A673 (cell line): ENCODE measurements at regions of chr15 and their contacts with region 1.

Region 1: DNA sequence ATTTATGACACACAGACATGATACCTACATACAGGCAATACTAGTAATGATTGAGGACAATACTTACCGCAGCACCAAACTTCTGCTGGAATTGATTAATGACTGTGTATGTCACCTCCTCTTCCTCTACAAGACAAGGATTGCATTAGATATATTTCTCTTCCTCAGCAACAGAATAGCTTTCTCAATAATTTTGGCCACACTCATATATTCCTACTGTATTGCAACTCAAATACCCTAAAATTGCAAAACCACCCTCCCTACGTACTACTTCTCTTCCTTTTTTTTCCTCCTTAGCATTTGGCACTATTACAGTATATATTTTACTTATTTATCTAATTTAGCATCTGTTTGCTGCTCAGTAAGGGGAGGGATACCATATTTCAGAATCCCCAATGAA is 14.8 kb downstream of the EXD1 start:
- DNase-seq: no peak
- H3K4me3 ChIP-seq: no peak overlapping the region
- H3K27ac ChIP-seq: no peak overlapping the region
- H3K4me1 ChIP-seq: no peaks in the 10 kb centered on the region
- H3K27me3 ChIP-seq: peaks cover 8% of the 10 kb centered on the region
- CTCF ChIP-seq: no peak

Region 2: GRCh38 chr15:41194444-41194843 is 21.3 kb before region 1 on chr15:
- CTCF ChIA-PET with region 1: no interaction called
- POLR2A ChIA-PET with region 1: no interaction called
- intact Hi-C with region 1: no loop called
- DNase-seq: no peak
- H3K4me3 ChIP-seq: no peak overlapping the region
- H3K27ac ChIP-seq: no peak overlapping the region
- H3K4me1 ChIP-seq: no peaks in the 10 kb centered on the region
- H3K27me3 ChIP-seq: no peaks in the 10 kb centered on the region
- CTCF ChIP-seq: no peak

Region 3: DNA sequence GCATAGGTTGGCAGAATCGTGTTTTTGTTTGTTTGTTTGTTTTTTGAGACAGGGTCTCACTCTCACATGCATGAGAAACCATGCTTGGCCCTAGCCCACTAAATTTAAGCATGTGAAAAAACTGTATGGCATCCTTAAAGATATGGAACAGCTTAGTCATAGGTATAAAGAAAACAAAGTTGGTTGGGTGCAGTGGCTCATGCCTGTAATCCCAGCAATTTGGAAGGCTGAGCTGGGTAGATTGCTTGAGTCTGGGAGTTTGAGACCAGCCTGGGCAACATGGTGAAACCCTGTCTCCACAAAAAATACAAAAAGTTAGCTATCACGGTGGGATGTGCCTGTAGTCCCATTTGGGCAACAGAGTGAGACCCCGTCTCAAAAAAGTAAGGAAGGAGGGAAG is 10.4 kb before region 1 on chr15:
- CTCF ChIA-PET with region 1: interaction called, 10 read pairs
- POLR2A ChIA-PET with region 1: no interaction called
- intact Hi-C with region 1: no loop called
- DNase-seq: no peak
- H3K4me3 ChIP-seq: no peak overlapping the region
- H3K27ac ChIP-seq: no peak overlapping the region
- H3K4me1 ChIP-seq: no peaks in the 10 kb centered on the region
- H3K27me3 ChIP-seq: no peaks in the 10 kb centered on the region
- CTCF ChIP-seq: no peak

Region 4: DNA sequence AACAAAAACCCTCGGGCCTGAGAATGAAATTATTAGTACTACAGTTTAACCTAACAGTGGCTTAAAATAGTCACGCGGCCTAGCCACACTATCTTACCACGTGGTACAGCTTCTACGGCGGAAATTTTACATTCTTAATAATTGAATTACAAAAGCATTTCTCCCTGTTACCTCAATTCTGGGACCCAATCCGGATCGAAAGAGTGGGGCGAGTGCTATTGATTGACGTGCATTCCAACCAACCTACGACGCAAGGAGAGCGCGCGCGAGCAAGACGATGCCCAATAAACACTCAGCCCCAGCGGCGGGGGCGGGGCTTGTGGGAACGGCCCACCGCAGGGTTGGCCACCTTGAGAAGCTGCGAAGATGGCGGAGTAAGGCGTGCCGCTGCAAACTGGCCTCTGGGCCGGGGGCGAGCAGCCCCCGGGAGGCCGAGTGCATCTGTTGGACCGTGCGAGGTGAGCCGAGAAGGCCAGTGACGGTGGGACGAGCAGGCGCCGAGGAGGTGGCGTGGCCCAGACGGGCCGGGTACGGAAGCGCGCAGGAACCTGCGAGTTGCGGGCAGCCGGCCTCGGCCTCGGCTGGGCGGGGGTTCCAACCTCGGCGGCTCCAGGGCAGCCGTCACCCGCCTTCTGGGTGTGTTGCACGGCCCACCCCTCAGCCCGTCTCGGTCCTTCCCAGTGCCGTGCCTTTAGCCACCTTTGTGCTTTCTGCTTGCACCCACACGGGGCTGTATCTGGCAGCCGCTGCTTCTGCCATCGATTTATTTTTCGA is 68.1 kb after region 1 on chr15:
- CTCF ChIA-PET with region 1: no interaction called
- POLR2A ChIA-PET with region 1: no interaction called
- intact Hi-C with region 1: no loop called
- DNase-seq: peak; percentile 100
- H3K4me3 ChIP-seq: peak overlapping the region; percentile 72
- H3K27ac ChIP-seq: peak overlapping the region; percentile 94
- H3K4me1 ChIP-seq: peaks cover 10% of the 10 kb centered on the region
- H3K27me3 ChIP-seq: no peaks in the 10 kb centered on the region
- CTCF ChIP-seq: no peak

Region 5: GRCh38 chr15:41827880-41828806 is 612.4 kb after region 1 on chr15 and contains the start of gene JMJD7:
- CTCF ChIA-PET with region 1: no interaction called
- POLR2A ChIA-PET with region 1: no interaction called
- intact Hi-C with region 1: no loop called
- DNase-seq: peak; percentile 91
- H3K4me3 ChIP-seq: peak within 1 kb of the TSS; percentile 88
- H3K27ac ChIP-seq: peak within 1 kb of the TSS; percentile 83
- H3K4me1 ChIP-seq: peaks cover 5% of the 10 kb centered on the region
- H3K27me3 ChIP-seq: no peaks in the 10 kb centered on the region
- CTCF ChIP-seq: no peak
- total RNA-seq, gene JMJD7: 18.3 and 18.8 TPM in 2 replicates